Mammary epithelial cell (primary cell): ENCODE measurements at regions of chr20 and their contacts with region 1.

Region 1: GRCh38 chr20:1535420-1536175 is 21.9 kb downstream of the SIRPD start:
- DNase-seq: no peak
- H3K4me3 ChIP-seq: no peak overlapping the region
- H3K27ac ChIP-seq: no peak overlapping the region
- H3K4me1 ChIP-seq: peaks cover 11% of the 10 kb centered on the region
- H3K27me3 ChIP-seq: no peaks in the 10 kb centered on the region
- CTCF ChIP-seq: no peak

Region 2: DNA sequence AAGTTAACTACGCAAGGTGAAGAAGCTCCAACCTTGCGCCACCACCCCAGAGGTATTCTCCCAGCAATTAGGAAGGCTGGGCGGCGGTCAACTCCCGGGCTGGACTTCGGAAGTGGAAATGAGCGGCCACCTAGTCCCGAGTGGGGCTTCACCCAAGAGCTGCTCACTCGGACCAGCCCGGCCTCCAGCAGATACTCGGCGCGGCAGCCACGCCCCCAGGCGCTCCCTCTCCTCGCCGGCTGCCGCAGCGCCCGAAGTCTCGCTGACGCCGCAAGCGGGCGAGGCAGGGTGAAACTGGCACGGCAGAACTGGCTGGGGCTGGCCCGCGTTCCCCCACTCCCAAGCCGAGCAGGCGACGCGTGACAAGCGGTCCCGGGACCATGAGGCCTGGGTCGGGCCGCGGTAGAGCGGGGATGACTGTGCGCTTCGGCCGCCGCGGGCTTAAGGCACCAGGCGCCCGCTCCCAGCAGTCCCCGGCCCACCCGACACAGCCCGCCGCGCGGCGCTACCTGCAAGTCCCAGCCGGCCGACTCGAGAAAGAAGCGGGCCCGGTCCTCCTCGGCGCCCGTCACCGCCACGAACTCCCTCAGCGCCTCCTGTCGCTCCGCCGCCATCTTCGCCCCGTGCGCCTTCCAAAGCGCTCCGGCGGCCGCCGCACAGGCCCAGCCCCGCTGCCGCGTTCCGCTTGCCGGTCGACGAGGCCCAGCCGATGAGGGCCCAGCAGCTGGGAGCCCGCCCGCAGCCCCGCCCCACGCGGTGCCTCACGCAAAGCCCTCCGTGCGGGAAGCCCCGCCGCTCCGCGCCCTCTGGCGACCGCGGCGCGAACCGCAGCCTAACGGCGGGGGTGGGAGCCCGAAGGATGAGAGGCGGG is 69.2 kb before region 1 on chr20 and contains the start of gene NSFL1C:
- CTCF ChIA-PET with region 1: no interaction called
- dilution Hi-C with region 1: no loop called
- in situ Hi-C with region 1: no loop called
- intact Hi-C with region 1: no loop called
- DNase-seq: peak; percentile 93
- H3K4me3 ChIP-seq: peak within 1 kb of the TSS; percentile 83 to 95 (median 83)
- H3K27ac ChIP-seq: peak within 1 kb of the TSS; percentile 94
- H3K4me1 ChIP-seq: peaks cover 39% of the 10 kb centered on the region
- H3K27me3 ChIP-seq: no peaks in the 10 kb centered on the region
- CTCF ChIP-seq: peak; percentile 70 to 92
- total RNA-seq, gene NSFL1C: 46.3 to 105 TPM

Region 3: GRCh38 chr20:1478576-1478975 is 57.0 kb before region 1 on chr20:
- CTCF ChIA-PET with region 1: no interaction called
- dilution Hi-C with region 1: no loop called
- in situ Hi-C with region 1: no loop called
- intact Hi-C with region 1: no loop called
- DNase-seq: peak; percentile 96
- H3K4me3 ChIP-seq: peak overlapping the region; percentile 32 to 50 (median 48)
- H3K27ac ChIP-seq: peak overlapping the region; percentile 94
- H3K4me1 ChIP-seq: peaks cover 52% of the 10 kb centered on the region
- H3K27me3 ChIP-seq: no peaks in the 10 kb centered on the region
- CTCF ChIP-seq: no peak

Region 4: DNA sequence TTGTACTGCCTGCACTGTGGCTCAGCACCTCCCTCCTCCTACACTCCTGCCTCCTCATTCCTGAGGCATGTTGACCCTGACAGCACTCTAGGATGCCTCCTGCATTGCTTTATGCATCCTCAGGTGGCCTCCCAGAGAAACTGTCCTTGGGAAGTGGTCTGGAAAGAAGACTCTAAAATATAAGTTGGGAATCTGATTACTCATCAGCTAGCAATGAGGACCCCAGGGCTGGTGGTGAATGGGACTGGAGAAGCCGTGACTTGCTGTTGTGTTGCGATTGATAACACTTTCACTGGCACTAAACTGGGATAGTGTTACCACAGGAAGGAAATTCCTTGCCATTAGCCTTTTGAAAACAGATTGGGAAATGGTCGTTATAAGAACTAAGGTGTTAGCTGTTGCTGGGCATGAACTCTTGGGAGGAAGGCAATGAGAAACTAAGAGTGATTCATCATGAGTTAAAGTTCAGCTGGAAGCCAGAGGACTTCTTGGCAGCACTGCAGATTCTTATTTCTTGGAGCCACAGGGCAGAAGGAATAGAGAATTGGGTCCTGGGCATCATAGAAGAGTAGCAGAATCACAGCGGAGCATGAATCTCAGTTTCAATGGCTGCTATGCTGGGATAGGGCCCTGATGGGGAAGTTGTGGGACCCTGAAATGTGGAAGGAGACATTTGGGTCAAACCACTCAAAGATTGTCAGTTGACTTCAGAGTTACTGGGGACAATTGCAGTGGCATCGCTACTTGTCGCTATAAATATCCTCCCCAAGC is 32.0 kb after region 1 on chr20:
- CTCF ChIA-PET with region 1: no interaction called
- dilution Hi-C with region 1: no loop called
- in situ Hi-C with region 1: no loop called
- intact Hi-C with region 1: loop called (anchors 2 kb)
- DNase-seq: peak; percentile 89
- H3K4me3 ChIP-seq: no peak overlapping the region
- H3K27ac ChIP-seq: peak overlapping the region; percentile 80
- H3K4me1 ChIP-seq: peaks cover 39% of the 10 kb centered on the region
- H3K27me3 ChIP-seq: no peaks in the 10 kb centered on the region
- CTCF ChIP-seq: no peak

Region 5: GRCh38 chr20:1600736-1601135 is 65.1 kb after region 1 on chr20:
- CTCF ChIA-PET with region 1: no interaction called
- dilution Hi-C with region 1: no loop called
- in situ Hi-C with region 1: no loop called
- intact Hi-C with region 1: no loop called
- DNase-seq: peak; percentile 56
- H3K4me3 ChIP-seq: no peak overlapping the region
- H3K27ac ChIP-seq: no peak overlapping the region
- H3K4me1 ChIP-seq: no peaks in the 10 kb centered on the region
- H3K27me3 ChIP-seq: no peaks in the 10 kb centered on the region
- CTCF ChIP-seq: no peak

Region 6: DNA sequence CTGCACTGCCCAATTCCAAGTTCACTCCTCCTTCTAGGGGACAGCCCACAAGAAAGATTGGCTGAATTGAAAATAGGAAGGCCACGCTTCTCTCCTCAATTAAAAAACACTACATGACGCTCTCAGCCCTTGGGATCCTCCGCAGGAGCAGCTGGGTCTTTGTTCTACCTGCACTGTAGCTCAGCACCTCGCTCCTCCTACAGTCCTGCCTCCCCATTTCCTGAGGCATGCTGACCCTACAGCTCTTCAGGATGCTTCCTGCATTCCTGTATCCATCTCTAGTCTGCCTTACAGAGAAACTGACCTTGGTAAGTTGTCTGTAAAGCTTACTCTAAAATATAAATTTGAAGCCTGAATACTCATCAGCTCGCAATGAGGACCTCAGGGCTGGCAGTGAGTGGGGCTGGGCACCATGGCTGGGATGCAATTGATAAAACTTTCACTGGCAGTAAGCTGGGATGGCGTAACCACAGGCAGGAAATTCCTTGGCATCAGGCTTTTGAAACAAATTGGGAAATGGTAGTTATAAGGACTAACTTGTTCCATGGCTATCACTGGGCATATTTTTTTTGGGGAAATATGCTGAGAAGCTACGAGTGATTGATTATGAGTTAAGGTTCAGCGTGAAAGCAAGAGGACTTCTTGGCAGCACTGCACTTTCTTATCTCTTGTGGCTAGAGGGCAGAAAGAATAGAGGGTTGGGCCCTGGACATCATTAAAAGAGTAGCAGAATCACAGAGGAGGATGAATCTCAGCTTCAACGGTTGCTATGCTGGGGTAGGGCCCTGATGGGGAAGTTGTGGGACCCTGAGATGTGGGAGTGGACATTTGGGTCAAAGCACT is 95.9 kb after region 1 on chr20:
- CTCF ChIA-PET with region 1: no interaction called
- dilution Hi-C with region 1: loop called (anchors 25 kb)
- in situ Hi-C with region 1: loop called in 1 of 2 experiments (anchors 25 kb)
- intact Hi-C with region 1: no loop called
- DNase-seq: peak; percentile 18
- H3K4me3 ChIP-seq: no peak overlapping the region
- H3K27ac ChIP-seq: no peak overlapping the region
- H3K4me1 ChIP-seq: peaks cover 22% of the 10 kb centered on the region
- H3K27me3 ChIP-seq: no peaks in the 10 kb centered on the region
- CTCF ChIP-seq: no peak

Region 7: GRCh38 chr20:1734269-1734858 is 198.8 kb after region 1 on chr20:
- CTCF ChIA-PET with region 1: interaction called, 3 read pairs
- dilution Hi-C with region 1: no loop called
- in situ Hi-C with region 1: no loop called
- intact Hi-C with region 1: loop called (anchors 10 kb)
- DNase-seq: peak; percentile 36
- H3K4me3 ChIP-seq: no peak overlapping the region
- H3K27ac ChIP-seq: no peak overlapping the region
- H3K4me1 ChIP-seq: no peaks in the 10 kb centered on the region
- H3K27me3 ChIP-seq: no peaks in the 10 kb centered on the region
- CTCF ChIP-seq: peak; percentile 8 to 54

Region 8: DNA sequence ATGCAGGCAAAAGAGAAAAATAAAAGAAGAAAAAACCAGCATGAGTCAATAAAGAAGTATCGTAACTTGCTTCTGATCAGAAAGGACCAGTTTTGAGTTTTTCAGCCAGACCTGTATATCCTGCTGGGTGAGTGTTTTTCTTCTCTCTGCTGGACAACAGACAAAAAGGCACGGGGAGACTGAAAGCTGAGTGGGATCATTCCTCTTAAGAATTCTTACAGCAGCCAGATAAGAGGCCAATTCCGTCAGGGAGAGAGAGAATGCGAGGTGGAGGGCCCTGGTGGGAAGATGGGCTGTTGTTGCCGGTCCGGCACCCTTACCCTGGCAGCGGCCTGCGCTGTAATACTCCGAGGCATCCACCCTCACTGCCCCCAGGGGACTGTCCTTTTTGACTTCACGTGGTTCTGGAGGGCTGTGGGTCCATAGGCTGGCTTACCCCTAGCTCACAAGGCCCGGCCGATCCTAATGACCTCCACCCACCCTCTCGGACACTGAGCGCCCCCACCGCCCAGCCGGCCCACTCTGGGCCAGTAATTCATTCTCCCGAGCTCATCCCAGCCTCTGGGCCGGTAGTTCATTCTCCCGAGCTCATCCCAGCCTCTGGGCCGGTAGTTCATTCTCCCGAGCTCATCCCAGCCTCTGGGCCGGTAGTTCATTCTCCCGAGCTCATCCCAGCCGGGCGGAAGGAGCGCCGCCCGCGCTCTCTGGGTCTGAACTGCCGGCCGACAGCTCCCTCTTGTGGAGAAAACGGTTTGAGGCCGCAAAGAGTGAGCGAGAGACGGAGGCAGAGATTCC is 241.3 kb after region 1 on chr20:
- CTCF ChIA-PET with region 1: no interaction called
- dilution Hi-C with region 1: no loop called
- in situ Hi-C with region 1: no loop called
- intact Hi-C with region 1: loop called (anchors 1 kb)
- DNase-seq: peak; percentile 80
- H3K4me3 ChIP-seq: peak overlapping the region; percentile 48 to 63 (median 57)
- H3K27ac ChIP-seq: peak overlapping the region; percentile 37
- H3K4me1 ChIP-seq: peaks cover 14% of the 10 kb centered on the region
- H3K27me3 ChIP-seq: no peaks in the 10 kb centered on the region
- CTCF ChIP-seq: peak; percentile 62 to 87